ENCODE measurements at regions of chr1 and their contacts with region 1.

Region 1: GRCh38 chr1:79252598-79252997 is 246.1 kb upstream of the ADGRL4 start:
- DNase-seq: no peak
- ATAC-seq: no peak
- H3K4me3 ChIP-seq: no peak overlapping the region
- H3K4me3 Mint-ChIP-seq: no peak overlapping the region
- H3K27ac ChIP-seq: no peak overlapping the region
- H3K27ac Mint-ChIP-seq: no peak overlapping the region
- H3K4me1 ChIP-seq: no peaks in the 10 kb centered on the region
- H3K4me1 Mint-ChIP-seq: no peaks in the 10 kb centered on the region
- H3K27me3 ChIP-seq: no peaks in the 10 kb centered on the region
- H3K27me3 Mint-ChIP-seq: no peaks in the 10 kb centered on the region
- CTCF ChIP-seq: no peak

Region 2: GRCh38 chr1:79177844-79178243 is 74.8 kb before region 1 on chr1:
- CTCF ChIA-PET with region 1: no interaction called
- POLR2A ChIA-PET with region 1: no interaction called
- intact Hi-C with region 1: no loop called
- DNase-seq: no peak
- ATAC-seq: no peak
- H3K4me3 ChIP-seq: no peak overlapping the region
- H3K4me3 Mint-ChIP-seq: no peak overlapping the region
- H3K27ac ChIP-seq: no peak overlapping the region
- H3K27ac Mint-ChIP-seq: no peak overlapping the region
- H3K4me1 ChIP-seq: no peaks in the 10 kb centered on the region
- H3K4me1 Mint-ChIP-seq: no peaks in the 10 kb centered on the region
- H3K27me3 ChIP-seq: no peaks in the 10 kb centered on the region
- H3K27me3 Mint-ChIP-seq: no peaks in the 10 kb centered on the region
- CTCF ChIP-seq: no peak

Region 3: GRCh38 chr1:79235301-79236002 is 17.1 kb before region 1 on chr1:
- CTCF ChIA-PET with region 1: interaction called, 10 read pairs
- POLR2A ChIA-PET with region 1: no interaction called
- intact Hi-C with region 1: no loop called
- DNase-seq: no peak
- ATAC-seq: no peak
- H3K4me3 ChIP-seq: no peak overlapping the region
- H3K4me3 Mint-ChIP-seq: no peak overlapping the region
- H3K27ac ChIP-seq: no peak overlapping the region
- H3K27ac Mint-ChIP-seq: no peak overlapping the region
- H3K4me1 ChIP-seq: no peaks in the 10 kb centered on the region
- H3K4me1 Mint-ChIP-seq: no peaks in the 10 kb centered on the region
- H3K27me3 ChIP-seq: no peaks in the 10 kb centered on the region
- H3K27me3 Mint-ChIP-seq: no peaks in the 10 kb centered on the region
- CTCF ChIP-seq: no peak

Measured in CD4-positive, alpha-beta T cell (primary cell).